ENCODE measurements at regions of chr20 and their contacts with region 1.

Region 1: DNA sequence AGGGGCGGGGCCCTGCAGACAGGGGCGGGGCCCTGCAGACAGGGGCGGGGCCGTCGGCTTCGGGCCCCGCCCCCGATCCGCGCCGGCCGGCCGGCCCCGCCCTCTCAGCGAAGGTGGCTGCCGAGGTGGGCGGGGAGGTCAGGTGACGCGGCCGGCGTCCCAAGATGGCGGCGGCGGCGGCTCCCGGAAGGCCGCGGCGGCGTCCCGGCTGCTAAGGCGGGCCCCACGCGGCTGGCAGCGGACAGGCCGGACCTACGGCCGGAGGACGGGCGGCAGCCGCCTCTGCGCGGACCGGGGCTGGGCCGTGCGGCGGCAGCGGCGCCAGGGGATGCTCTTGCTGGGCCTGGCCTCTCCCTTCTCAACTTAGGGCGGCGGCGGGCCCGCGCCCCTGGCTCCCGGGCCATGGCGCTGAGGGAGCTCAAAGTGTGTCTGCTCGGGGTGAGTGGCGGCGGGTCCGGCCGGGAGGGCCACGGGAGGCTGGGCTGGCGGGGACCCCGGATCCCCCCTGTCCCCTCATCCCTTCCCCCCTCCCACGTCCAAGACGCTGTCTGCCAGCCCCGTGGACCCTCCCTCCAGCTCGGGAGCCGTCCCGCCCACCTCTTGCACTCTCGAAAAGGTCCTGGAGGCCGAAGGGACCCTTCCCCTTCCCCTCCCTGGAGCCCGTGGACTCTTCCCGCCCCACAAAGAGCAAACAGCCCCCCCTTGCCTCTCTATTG is at the start of gene RAB22A:
- DNase-seq: peak; percentile 68
- H3K4me3 ChIP-seq: peak within 1 kb of the TSS; percentile 84 to 96 (median 93)
- H3K27ac ChIP-seq: peak within 1 kb of the TSS; percentile 91
- H3K4me1 ChIP-seq: peaks cover 50% of the 10 kb centered on the region
- H3K27me3 ChIP-seq: no peaks in the 10 kb centered on the region
- CTCF ChIP-seq: no peak
- total RNA-seq, gene RAB22A: 24.7 to 24.8 TPM

Region 2: DNA sequence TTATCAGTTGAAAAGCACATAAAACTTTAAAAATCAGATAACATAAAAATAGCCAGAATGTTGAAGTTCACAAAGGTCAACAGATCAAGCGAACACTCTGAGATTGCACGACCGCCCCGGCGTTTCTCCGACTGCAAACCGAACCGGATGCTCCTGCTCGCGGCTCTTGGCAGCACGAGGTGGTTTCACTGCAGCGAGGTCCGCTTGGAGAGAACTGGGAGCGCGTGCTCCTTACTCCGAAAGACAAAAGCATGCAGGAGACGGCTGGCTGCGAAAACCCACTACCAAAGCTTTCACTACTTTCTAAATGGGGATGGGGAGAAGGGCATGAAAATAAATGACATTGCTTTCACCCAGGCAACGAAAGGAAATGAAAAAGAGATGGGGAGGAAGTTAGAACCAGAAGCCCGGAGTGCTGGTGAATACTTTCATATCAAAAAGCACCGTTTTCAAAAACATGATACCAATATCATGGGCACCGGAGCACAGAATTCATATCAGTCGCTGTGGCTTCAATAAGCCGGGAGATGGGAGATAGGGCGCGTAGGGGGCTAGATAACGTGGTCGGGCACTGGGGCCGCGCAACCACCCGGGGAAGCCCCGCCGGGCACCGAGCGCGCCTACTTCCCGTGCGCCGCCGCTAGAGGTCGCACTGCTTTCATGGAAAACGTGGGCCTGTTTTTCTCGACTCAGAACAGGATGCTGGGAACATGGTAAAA is 73.0 kb before region 1 on chr20:
- CTCF ChIA-PET with region 1: no interaction called
- dilution Hi-C with region 1: loop called (anchors 5 kb)
- in situ Hi-C with region 1: no loop called
- intact Hi-C with region 1: loop called (anchors 5 kb)
- DNase-seq: peak; percentile 58
- H3K4me3 ChIP-seq: peak overlapping the region; percentile 51 to 74 (median 52)
- H3K27ac ChIP-seq: peak overlapping the region; percentile 48
- H3K4me1 ChIP-seq: peaks cover 8% of the 10 kb centered on the region
- H3K27me3 ChIP-seq: no peaks in the 10 kb centered on the region
- CTCF ChIP-seq: peak; percentile 92 to 98

Region 3: DNA sequence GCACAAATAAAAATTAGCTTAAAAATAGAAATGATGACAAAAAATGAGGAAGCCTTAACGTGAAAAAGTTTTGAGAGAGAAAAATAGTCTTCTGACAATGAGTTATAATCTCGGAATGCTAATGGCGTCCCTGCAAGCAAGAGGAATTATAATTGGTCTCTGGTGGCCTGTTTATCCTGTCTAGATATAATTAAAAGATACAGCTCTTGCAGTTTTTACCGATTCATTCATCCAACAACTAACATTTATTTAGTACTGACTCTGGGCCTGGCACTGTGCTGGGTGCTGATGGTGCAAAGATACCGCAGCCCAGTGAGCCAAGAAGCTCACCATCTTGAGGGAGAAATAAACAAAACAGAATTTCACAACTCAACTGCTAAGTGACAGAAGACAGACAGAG is 49.7 kb before region 1 on chr20:
- CTCF ChIA-PET with region 1: no interaction called
- dilution Hi-C with region 1: no loop called
- in situ Hi-C with region 1: no loop called
- intact Hi-C with region 1: loop called (anchors 5 kb)
- DNase-seq: no peak
- H3K4me3 ChIP-seq: no peak overlapping the region
- H3K27ac ChIP-seq: no peak overlapping the region
- H3K4me1 ChIP-seq: no peaks in the 10 kb centered on the region
- H3K27me3 ChIP-seq: no peaks in the 10 kb centered on the region
- CTCF ChIP-seq: no peak

Region 4: GRCh38 chr20:58342104-58342960 is 32.6 kb after region 1 on chr20:
- CTCF ChIA-PET with region 1: no interaction called
- dilution Hi-C with region 1: no loop called
- in situ Hi-C with region 1: no loop called
- intact Hi-C with region 1: loop called (anchors 2 kb)
- DNase-seq: peak; percentile 71
- H3K4me3 ChIP-seq: no peak overlapping the region
- H3K27ac ChIP-seq: peak overlapping the region; percentile 83
- H3K4me1 ChIP-seq: peaks cover 61% of the 10 kb centered on the region
- H3K27me3 ChIP-seq: no peaks in the 10 kb centered on the region
- CTCF ChIP-seq: no peak

Region 5: GRCh38 chr20:58447511-58448391 is 138.0 kb after region 1 on chr20:
- CTCF ChIA-PET with region 1: no interaction called
- dilution Hi-C with region 1: no loop called
- in situ Hi-C with region 1: no loop called
- intact Hi-C with region 1: loop called (anchors 5 kb)
- DNase-seq: peak; percentile 29
- H3K4me3 ChIP-seq: no peak overlapping the region
- H3K27ac ChIP-seq: no peak overlapping the region
- H3K4me1 ChIP-seq: no peaks in the 10 kb centered on the region
- H3K27me3 ChIP-seq: no peaks in the 10 kb centered on the region
- CTCF ChIP-seq: peak; percentile 66 to 77

Region 6: GRCh38 chr20:58888521-58889333 is 579.0 kb after region 1 on chr20:
- CTCF ChIA-PET with region 1: no interaction called
- dilution Hi-C with region 1: no loop called
- in situ Hi-C with region 1: no loop called
- intact Hi-C with region 1: loop called (anchors 5 kb)
- DNase-seq: peak; percentile 73
- H3K4me3 ChIP-seq: peak overlapping the region; percentile 66 to 89 (median 83)
- H3K27ac ChIP-seq: peak overlapping the region; percentile 59
- H3K4me1 ChIP-seq: peaks cover 10% of the 10 kb centered on the region
- H3K27me3 ChIP-seq: no peaks in the 10 kb centered on the region
- CTCF ChIP-seq: no peak